Left lung (tissue), 14 donors: ENCODE measurements at regions of chr9 and their contacts with region 1.

Region 1: DNA sequence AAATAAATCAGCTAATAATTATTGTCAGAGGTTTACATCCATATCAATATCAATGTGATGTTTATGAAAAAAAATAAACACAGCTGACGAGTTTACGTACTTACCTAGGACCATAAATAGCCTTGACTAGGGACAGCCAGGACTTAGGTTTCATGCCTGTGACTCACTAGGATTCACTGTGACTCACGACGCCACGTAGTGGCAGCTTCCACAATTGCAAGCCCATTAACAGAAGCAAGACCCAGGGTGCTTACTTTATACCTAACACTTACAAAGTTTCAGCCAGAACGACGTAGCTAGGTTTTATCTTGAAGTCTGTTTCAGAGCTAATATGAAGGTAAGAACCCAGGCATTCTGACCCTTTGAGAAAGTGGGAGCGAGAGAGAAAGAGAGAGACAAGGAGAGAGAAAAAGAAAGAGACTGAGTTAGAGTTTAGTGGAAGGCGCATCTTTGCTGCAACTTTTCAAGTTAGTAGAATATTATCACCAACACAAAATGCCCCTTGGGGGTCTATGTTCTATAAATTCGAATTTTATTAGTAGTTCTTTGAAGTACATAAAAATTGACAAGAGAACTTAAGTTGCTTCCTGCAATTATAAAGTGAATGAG is 191.2 kb downstream of the GNA14 start:
- DNase-seq: peak in 3 of 4 donors; percentile 58 to 85 (median 84)
- ATAC-seq: peak; percentile 93
- H3K4me3 ChIP-seq: no peak overlapping the region
- H3K27ac ChIP-seq: peak overlapping the region in 1 of 2 donors; percentile 30
- H3K4me1 ChIP-seq: peaks cover 10 to 22% of the 10 kb centered on the region in 2 donors
- H3K27me3 ChIP-seq: no peaks in the 10 kb centered on the region
- CTCF ChIP-seq: peak; percentile 89 to 98

Region 2: DNA sequence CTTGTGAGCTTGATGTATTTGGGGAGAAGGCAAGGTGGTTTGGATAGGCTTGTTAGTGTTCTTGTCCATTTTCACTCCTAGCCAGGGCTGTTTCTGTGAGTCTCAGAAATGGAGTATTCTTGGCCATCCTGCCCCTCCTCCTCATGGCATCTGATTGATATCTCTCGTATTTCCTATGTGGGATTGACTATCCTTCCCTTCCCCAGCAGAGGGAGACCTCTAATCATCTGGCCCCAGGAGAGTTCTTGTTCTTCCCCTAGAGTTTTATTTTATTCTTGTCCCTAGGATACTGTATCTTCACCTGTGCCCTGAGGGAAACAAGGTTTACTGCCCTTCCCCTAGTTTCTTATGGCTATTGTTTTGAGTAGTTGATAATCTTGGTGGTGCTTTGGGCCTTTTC is 165.2 kb before region 1 on chr9:
- intact Hi-C with region 1: no loop called
- DNase-seq: peak in 1 of 4 donors; percentile 2
- ATAC-seq: no peak
- H3K4me3 ChIP-seq: no peak overlapping the region
- H3K27ac ChIP-seq: no peak overlapping the region
- H3K4me1 ChIP-seq: no peaks in the 10 kb centered on the region
- H3K27me3 ChIP-seq: no peaks in the 10 kb centered on the region
- CTCF ChIP-seq: peak in 1 of 2 donors; percentile 20

Region 3: GRCh38 chr9:77374266-77374665 is 82.7 kb before region 1 on chr9:
- intact Hi-C with region 1: no loop called
- DNase-seq: no peak
- ATAC-seq: no peak
- H3K4me3 ChIP-seq: no peak overlapping the region
- H3K27ac ChIP-seq: no peak overlapping the region
- H3K4me1 ChIP-seq: no peaks in the 10 kb centered on the region
- H3K27me3 ChIP-seq: no peaks in the 10 kb centered on the region
- CTCF ChIP-seq: no peak

Region 4: GRCh38 chr9:77751341-77752091 is 294.6 kb after region 1 on chr9:
- intact Hi-C with region 1: loop called in 1 of 2 experiments (anchors 10 kb)
- DNase-seq: peak in 2 of 4 donors; percentile 60 to 74
- ATAC-seq: peak; percentile 91
- H3K4me3 ChIP-seq: no peak overlapping the region
- H3K27ac ChIP-seq: peak overlapping the region; percentile 1 to 53
- H3K4me1 ChIP-seq: peaks cover 0 to 23% of the 10 kb centered on the region in 2 donors
- H3K27me3 ChIP-seq: no peaks in the 10 kb centered on the region
- CTCF ChIP-seq: peak; percentile 28 to 30